ENCODE measurements at regions of chr14 and their contacts with region 1.

Region 1: DNA sequence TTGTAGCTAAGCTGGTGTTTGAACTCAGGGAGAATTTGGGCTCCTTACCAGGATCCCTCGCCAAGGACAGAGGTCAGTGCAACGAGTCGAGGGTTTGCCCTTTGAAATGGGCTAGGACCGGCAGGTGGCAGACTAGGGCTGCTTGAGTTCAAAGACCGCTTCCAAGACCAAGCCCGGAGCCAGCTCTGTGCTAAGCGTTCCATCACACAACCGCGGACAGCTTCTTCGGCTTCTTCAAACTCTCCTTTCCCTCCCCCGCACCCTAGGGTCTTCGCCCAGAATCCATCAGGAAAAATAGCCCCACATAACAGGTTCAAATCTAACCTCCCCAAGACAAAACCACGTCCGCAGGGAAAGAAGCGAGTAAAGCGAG is 705 bp upstream of the FLVCR2 start:
- DNase-seq: peak; percentile 73
- ATAC-seq: peak; percentile 82
- H3K4me3 ChIP-seq: peak overlapping the region; percentile 64 to 91 (median 82)
- H3K27ac ChIP-seq: peak overlapping the region; percentile 60
- H3K4me1 ChIP-seq: peaks cover 44% of the 10 kb centered on the region
- H3K27me3 ChIP-seq: no peaks in the 10 kb centered on the region; a peak in 1 of 5 replicates
- CTCF ChIP-seq: peak; percentile 94
- EP300 ChIP-seq: no peak
- POLR2A ChIP-seq: no peak
- RAD21 ChIP-seq: peak; percentile 92

Region 2: DNA sequence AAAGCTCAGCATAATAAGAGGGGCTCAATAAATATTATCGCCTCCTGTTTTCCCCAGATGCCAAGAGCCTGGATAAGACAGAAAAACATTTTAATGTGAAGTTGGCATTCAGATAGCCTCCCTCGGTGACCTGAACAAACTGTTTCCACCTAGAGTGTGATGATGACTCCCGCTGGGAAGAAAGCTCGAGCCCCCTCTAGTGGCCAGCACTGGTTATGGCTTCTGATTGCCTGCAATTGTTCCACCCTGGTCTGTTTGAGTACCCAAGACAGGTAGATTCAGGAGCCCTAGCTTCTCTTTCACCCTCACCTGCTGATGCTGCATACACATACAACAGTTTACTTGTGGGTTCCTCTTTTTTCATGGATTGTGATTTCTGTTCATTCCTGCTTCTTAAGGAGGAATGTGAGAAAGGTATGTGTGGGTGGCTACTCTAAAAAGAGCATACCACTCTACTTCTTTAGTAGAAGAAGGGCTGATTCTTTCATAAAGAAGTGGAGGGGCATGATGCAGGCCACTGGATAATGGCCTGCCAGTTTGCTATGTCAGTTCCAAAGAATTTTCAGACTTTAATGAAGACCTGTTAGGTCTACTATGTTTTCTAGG is 76.5 kb after region 1 on chr14:
- CTCF ChIA-PET with region 1: interaction called, 123 read pairs
- POLR2A ChIA-PET with region 1: interaction called, 127 read pairs
- in situ Hi-C with region 1: loop called (anchors 5 kb)
- intact Hi-C with region 1: loop called (anchors 1 kb)
- DNase-seq: peak; percentile 60
- ATAC-seq: peak; percentile 58
- H3K4me3 ChIP-seq: no peak overlapping the region
- H3K27ac ChIP-seq: no peak overlapping the region
- H3K4me1 ChIP-seq: peaks cover 67% of the 10 kb centered on the region
- H3K27me3 ChIP-seq: no peaks in the 10 kb centered on the region
- CTCF ChIP-seq: peak; percentile 93
- EP300 ChIP-seq: 0 out of 4 replicates have a peak, but pooled peaks of 1 of the 2 experiments have one; percentile 3
- POLR2A ChIP-seq: no peak
- RAD21 ChIP-seq: peak; percentile 94

Region 3: GRCh38 chr14:75660630-75661494 is 83.1 kb after region 1 on chr14 and contains the starts of genes ERG28 and TTLL5:
- CTCF ChIA-PET with region 1: no interaction called
- POLR2A ChIA-PET with region 1: interaction called, 36 read pairs
- in situ Hi-C with region 1: no loop called
- intact Hi-C with region 1: no loop called
- DNase-seq: peak; percentile 99
- ATAC-seq: peak; percentile 98
- H3K4me3 ChIP-seq: peak within 1 kb of the TSS; percentile 85 to 96 (median 94)
- H3K27ac ChIP-seq: peak within 1 kb of the TSS; percentile 89
- H3K4me1 ChIP-seq: peaks cover 30% of the 10 kb centered on the region
- H3K27me3 ChIP-seq: no peaks in the 10 kb centered on the region; a peak in 1 of 5 replicates
- CTCF ChIP-seq: peak; percentile 18; the same call in 1 of the 2 replicates
- EP300 ChIP-seq: no peak
- POLR2A ChIP-seq: peak; percentile 70 to 90
- RAD21 ChIP-seq: 0 out of 2 replicates have a peak, but pooled peaks have one; percentile 47
- total RNA-seq, gene ERG28: 21.5 and 27.3 TPM in 2 replicates
- total RNA-seq, gene TTLL5: 18.8 and 22.0 TPM in 2 replicates